Caco-2 (cell line): ENCODE measurements at regions of chr11 and their contacts with region 1.

Region 1: DNA sequence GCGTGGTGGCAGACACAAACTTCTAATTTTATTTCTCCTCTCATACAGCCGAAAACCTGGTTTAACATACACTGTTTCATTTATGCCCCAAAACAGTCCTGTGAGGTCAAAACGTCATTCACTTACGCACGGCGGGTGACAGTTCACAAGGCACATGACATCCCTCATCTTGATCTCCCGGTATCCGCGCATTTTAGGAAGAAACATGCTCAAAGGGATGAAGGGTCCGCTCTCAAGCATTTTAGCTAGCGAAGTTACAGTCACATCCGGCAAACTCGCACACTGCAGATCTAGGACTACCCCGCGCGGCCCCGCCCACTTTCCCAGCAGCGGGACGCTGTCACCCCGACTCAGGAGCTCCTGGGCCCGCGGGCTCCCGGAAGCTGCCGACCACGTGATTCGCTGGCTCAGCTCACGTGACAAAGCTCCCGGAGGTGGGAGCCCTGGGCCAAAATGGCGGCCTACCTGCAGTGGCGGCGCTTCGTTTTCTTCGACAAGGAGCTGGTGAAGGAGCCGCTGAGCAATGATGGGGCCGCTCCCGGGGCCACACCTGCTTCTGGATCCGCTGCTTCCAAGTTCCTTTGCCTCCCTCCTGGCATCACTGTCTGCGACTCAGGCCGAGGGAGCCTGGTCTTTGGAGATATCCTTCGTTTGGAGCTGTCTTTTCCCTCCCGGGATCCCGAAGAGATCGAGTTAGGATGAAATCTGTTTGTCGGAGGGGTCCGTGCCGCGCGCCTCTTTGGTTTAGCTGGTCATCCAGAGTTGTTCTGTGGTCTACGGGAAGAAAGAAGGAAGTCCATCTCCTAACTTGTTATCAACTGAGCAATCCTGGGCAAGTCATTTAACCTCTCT is at the start of gene VPS11:
- DNase-seq: peak; percentile 99
- H3K4me3 ChIP-seq: peak within 1 kb of the TSS; percentile 80
- H3K4me3 Mint-ChIP-seq: peak within 1 kb of the TSS; percentile 100
- H3K27ac Mint-ChIP-seq: peak within 1 kb of the TSS; percentile 95
- H3K4me1 ChIP-seq: no peaks in the 10 kb centered on the region
- H3K4me1 Mint-ChIP-seq: peaks cover 12% of the 10 kb centered on the region
- H3K27me3 ChIP-seq: no peaks in the 10 kb centered on the region
- H3K27me3 Mint-ChIP-seq: no peaks in the 10 kb centered on the region
- CTCF ChIP-seq: no peak
- total RNA-seq, gene VPS11: 43.2 and 47.7 TPM in 2 replicates

Region 2: GRCh38 chr11:118856314-118856713 is 211.3 kb before region 1 on chr11:
- CTCF ChIA-PET with region 1: no interaction called
- POLR2A ChIA-PET with region 1: no interaction called
- intact Hi-C with region 1: no loop called
- DNase-seq: no peak
- H3K4me3 ChIP-seq: no peak overlapping the region
- H3K4me3 Mint-ChIP-seq: no peak overlapping the region
- H3K27ac Mint-ChIP-seq: no peak overlapping the region
- H3K4me1 ChIP-seq: no peaks in the 10 kb centered on the region
- H3K4me1 Mint-ChIP-seq: no peaks in the 10 kb centered on the region
- H3K27me3 ChIP-seq: no peaks in the 10 kb centered on the region
- H3K27me3 Mint-ChIP-seq: no peaks in the 10 kb centered on the region
- CTCF ChIP-seq: no peak

Region 3: GRCh38 chr11:118997627-118998387 is 69.8 kb before region 1 on chr11 and contains the start of gene CENATAC:
- CTCF ChIA-PET with region 1: no interaction called
- POLR2A ChIA-PET with region 1: interaction called, 16 read pairs
- intact Hi-C with region 1: no loop called
- DNase-seq: peak; percentile 98 to 100
- H3K4me3 ChIP-seq: peak within 1 kb of the TSS; percentile 75
- H3K4me3 Mint-ChIP-seq: peak within 1 kb of the TSS; percentile 96
- H3K27ac Mint-ChIP-seq: peak within 1 kb of the TSS; percentile 94
- H3K4me1 ChIP-seq: peaks cover 17% of the 10 kb centered on the region
- H3K4me1 Mint-ChIP-seq: peaks cover 24% of the 10 kb centered on the region
- H3K27me3 ChIP-seq: no peaks in the 10 kb centered on the region
- H3K27me3 Mint-ChIP-seq: no peaks in the 10 kb centered on the region
- CTCF ChIP-seq: peak in 1 of 2 experiments; percentile 11
- total RNA-seq, gene CENATAC: 185 and 194 TPM in 2 replicates

Region 4: DNA sequence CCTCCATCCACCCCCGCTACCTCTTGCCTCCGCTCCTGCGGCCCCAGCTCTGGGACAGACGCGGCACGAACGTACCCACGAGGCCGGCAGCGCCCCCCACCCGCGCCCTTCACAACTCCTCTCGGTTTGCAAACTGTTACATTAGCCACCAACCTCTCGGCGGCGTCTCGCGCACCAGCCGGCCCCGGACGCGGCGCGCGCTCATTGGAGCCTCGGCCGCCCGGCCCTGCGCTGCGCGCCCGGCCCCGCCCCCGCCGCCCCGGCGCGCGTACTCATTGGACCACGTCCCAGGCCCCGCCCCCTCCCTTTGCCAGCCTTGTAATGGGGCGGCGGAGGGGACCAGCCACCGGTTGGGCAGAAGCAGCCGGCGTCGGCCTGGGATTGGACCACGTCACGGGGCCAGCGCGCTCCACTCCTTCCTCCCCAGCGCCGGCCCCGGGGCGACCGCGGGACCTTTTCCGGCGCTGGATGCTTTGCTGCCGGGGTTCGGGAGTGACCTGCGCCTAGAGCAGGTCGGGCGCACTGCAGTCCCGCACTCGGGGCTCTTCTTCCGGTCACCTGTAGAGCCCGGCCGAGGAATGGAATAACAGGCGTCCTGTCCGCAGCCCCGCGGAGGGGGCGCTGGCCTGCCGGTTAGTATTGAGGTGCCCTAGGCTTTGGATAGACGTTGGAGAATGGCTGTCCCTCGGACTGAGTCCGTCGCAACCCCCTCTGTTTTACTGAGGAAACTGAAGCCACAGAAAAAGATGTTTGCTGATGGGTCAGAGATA is 10.4 kb before region 1 on chr11 and contains the start of gene HYOU1:
- CTCF ChIA-PET with region 1: interaction called, 25 read pairs
- POLR2A ChIA-PET with region 1: interaction called, 21 read pairs
- intact Hi-C with region 1: loop called (anchors 1 kb)
- DNase-seq: peak; percentile 100
- H3K4me3 ChIP-seq: peak within 1 kb of the TSS; percentile 94
- H3K4me3 Mint-ChIP-seq: peak within 1 kb of the TSS; percentile 88
- H3K27ac Mint-ChIP-seq: peak within 1 kb of the TSS; percentile 98
- H3K4me1 ChIP-seq: peaks cover 10% of the 10 kb centered on the region
- H3K4me1 Mint-ChIP-seq: peaks cover 20% of the 10 kb centered on the region
- H3K27me3 ChIP-seq: no peaks in the 10 kb centered on the region
- H3K27me3 Mint-ChIP-seq: no peaks in the 10 kb centered on the region
- CTCF ChIP-seq: peak; percentile 32 to 77
- total RNA-seq, gene HYOU1: 306 and 366 TPM in 2 replicates

Region 5: GRCh38 chr11:119084663-119085436 is 17.3 kb after region 1 on chr11 and contains the start of gene HMBS:
- CTCF ChIA-PET with region 1: interaction called, 19 read pairs
- POLR2A ChIA-PET with region 1: interaction called, 72 read pairs
- intact Hi-C with region 1: loop called (anchors 1 kb)
- DNase-seq: peak; percentile 97 to 98
- H3K4me3 ChIP-seq: peak within 1 kb of the TSS; percentile 85
- H3K4me3 Mint-ChIP-seq: peak within 1 kb of the TSS; percentile 97
- H3K27ac Mint-ChIP-seq: peak within 1 kb of the TSS; percentile 98
- H3K4me1 ChIP-seq: peaks cover 11% of the 10 kb centered on the region
- H3K4me1 Mint-ChIP-seq: peaks cover 1% of the 10 kb centered on the region
- H3K27me3 ChIP-seq: no peaks in the 10 kb centered on the region
- H3K27me3 Mint-ChIP-seq: no peaks in the 10 kb centered on the region
- CTCF ChIP-seq: no peak
- total RNA-seq, gene HMBS: 94.9 and 95.7 TPM in 2 replicates

Region 6: GRCh38 chr11:119101759-119102423 is 34.3 kb after region 1 on chr11 and contains the start of gene DPAGT1:
- CTCF ChIA-PET with region 1: interaction called, 4 read pairs
- POLR2A ChIA-PET with region 1: interaction called, 17 read pairs
- intact Hi-C with region 1: loop called (anchors 1 kb)
- DNase-seq: peak; percentile 97 to 99
- H3K4me3 ChIP-seq: peak within 1 kb of the TSS; percentile 43
- H3K4me3 Mint-ChIP-seq: peak within 1 kb of the TSS; percentile 85
- H3K27ac Mint-ChIP-seq: peak within 1 kb of the TSS; percentile 98
- H3K4me1 ChIP-seq: peaks cover 24% of the 10 kb centered on the region
- H3K4me1 Mint-ChIP-seq: peaks cover 29% of the 10 kb centered on the region
- H3K27me3 ChIP-seq: no peaks in the 10 kb centered on the region
- H3K27me3 Mint-ChIP-seq: no peaks in the 10 kb centered on the region
- CTCF ChIP-seq: peak in 1 of 2 experiments; percentile 8
- total RNA-seq, gene DPAGT1: 117 and 119 TPM in 2 replicates

Region 7: GRCh38 chr11:119121008-119121810 is 53.6 kb after region 1 on chr11 and contains the start of gene HINFP:
- CTCF ChIA-PET with region 1: interaction called, 6 read pairs
- POLR2A ChIA-PET with region 1: interaction called, 13 read pairs
- intact Hi-C with region 1: no loop called
- DNase-seq: peak; percentile 100
- H3K4me3 ChIP-seq: peak within 1 kb of the TSS; percentile 84
- H3K4me3 Mint-ChIP-seq: peak within 1 kb of the TSS; percentile 88
- H3K27ac Mint-ChIP-seq: peak within 1 kb of the TSS; percentile 90
- H3K4me1 ChIP-seq: peaks cover 18% of the 10 kb centered on the region
- H3K4me1 Mint-ChIP-seq: peaks cover 18% of the 10 kb centered on the region
- H3K27me3 ChIP-seq: no peaks in the 10 kb centered on the region
- H3K27me3 Mint-ChIP-seq: no peaks in the 10 kb centered on the region
- CTCF ChIP-seq: no peak
- total RNA-seq, gene HINFP: 61.6 and 65.2 TPM in 2 replicates

Region 8: DNA sequence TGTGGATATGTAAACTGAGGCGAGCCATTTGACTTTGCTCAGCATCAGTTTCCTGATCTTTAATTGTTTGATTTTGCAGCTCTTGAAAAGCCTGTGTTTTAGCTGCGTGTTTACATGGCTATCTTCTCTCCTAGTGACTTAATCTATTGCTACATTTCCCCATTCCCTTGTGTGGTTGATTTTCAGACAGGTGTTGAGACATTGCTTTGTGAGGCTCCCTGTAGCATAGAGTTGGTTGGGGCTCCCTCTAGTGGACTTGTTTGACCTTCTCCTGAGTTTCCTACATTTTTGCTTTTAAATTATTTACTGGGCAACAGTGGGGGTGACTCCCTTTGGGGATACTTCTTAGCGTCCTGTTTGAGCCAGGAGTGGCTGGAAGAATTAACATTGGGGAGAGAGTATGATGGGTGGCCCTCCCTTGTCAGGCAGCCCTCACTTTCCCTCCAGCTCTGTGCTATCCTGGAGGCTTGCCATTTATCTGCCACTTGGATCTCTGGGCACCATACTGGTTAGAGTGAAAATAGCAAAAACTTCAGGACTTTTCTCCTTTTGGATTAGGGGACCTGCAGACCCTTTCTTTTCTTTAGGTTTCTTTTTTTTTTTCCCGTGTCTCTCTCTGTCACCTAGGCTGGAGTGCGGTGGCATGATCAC is 129.4 kb after region 1 on chr11:
- CTCF ChIA-PET with region 1: interaction called, 5 read pairs
- POLR2A ChIA-PET with region 1: interaction called, 4 read pairs
- intact Hi-C with region 1: loop called (anchors 1 kb)
- DNase-seq: peak; percentile 86 to 92
- H3K4me3 ChIP-seq: no peak overlapping the region
- H3K4me3 Mint-ChIP-seq: no peak overlapping the region
- H3K27ac Mint-ChIP-seq: peak overlapping the region; percentile 15
- H3K4me1 ChIP-seq: peaks cover 10% of the 10 kb centered on the region
- H3K4me1 Mint-ChIP-seq: peaks cover 10% of the 10 kb centered on the region
- H3K27me3 ChIP-seq: no peaks in the 10 kb centered on the region
- H3K27me3 Mint-ChIP-seq: peaks cover 2% of the 10 kb centered on the region
- CTCF ChIP-seq: peak; percentile 93 to 96

Region 9: DNA sequence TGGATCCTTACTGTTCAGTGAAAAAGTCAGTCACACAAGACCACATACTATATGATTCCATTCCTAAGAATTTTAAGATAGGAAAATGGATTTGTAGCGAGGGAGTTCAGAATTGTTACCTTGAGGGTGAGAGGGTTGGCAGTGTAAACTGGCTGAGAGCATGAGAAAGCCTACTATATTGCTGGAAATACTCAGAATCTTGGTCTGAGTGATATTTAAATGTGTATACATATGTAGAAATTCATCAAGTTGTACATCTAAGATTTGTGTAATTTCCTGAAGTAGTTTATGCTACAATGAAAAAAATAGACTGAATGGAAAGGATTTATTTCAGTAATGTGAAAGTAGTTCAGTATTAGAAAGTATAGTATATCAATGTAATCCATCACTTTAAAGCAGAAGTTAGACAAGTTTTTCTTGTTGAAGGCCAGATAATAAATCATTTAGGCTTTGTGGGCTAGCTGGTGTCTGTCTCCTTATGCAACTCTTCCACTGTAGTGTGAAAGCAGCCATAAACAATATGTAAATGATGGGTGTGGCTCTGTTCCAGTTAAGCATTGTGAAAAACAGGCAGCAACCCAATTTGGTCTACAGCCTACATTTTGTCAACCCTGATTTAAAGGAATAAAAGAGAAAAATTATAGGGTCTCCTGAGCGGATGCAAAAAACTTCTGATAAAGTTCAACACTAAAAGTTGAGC is 482.6 kb after region 1 on chr11:
- CTCF ChIA-PET with region 1: no interaction called
- POLR2A ChIA-PET with region 1: no interaction called
- intact Hi-C with region 1: no loop called
- DNase-seq: no peak
- H3K4me3 ChIP-seq: no peak overlapping the region
- H3K4me3 Mint-ChIP-seq: no peak overlapping the region
- H3K27ac Mint-ChIP-seq: no peak overlapping the region
- H3K4me1 ChIP-seq: no peaks in the 10 kb centered on the region
- H3K4me1 Mint-ChIP-seq: no peaks in the 10 kb centered on the region
- H3K27me3 ChIP-seq: no peaks in the 10 kb centered on the region
- H3K27me3 Mint-ChIP-seq: no peaks in the 10 kb centered on the region
- CTCF ChIP-seq: no peak